K562 (cell line): ENCODE measurements at regions of chr16 and their contacts with region 1.

Region 1: DNA sequence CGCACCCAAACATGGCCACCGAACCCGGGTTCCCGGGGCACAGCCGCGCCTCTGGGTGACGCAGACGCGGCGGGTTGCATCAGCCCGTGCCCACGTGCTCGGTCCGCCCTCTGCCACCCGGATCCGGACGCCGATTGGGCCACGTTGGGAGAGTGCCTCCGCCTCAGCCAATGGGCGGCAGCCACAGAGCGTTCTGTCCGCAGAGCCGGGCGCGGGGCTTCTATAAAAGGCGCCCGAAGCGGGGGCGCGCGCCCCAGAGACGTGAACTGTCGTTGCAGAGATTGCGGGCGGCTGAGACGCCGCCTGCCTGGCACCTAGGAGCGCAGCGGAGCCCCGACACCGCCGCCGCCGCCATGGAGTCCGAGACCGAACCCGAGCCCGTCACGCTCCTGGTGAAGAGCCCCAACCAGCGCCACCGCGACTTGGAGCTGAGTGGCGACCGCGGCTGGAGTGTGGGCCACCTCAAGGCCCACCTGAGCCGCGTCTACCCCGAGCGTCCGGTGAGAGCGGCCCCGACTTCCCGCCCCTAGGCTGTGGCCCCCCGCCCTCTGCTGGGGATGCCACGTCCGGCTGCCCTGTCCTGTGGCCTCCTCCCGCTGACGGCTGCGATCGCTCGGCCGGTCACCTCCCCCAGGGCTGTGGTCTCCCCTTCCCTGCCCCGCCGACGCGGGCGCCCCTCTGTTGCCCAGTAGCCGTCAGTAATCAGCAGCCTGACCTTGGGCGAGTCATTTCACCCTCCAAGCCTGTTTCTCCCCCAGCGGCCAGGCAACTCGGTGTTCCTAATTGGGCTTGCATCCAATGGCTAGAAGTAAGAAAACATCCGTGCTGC is at the start of gene HERPUD1:
- DNase-seq: peak; percentile 97 to 99 (median 98)
- ATAC-seq: peak; percentile 92
- H3K4me3 ChIP-seq: peak within 1 kb of the TSS; percentile 95
- H3K27ac ChIP-seq: peak within 1 kb of the TSS; percentile 91
- H3K4me1 ChIP-seq: peaks cover 17 to 22% of the 10 kb centered on the region in 2 experiments; a peak in 4 of 5 replicates
- H3K27me3 ChIP-seq: no peaks in the 10 kb centered on the region
- CTCF ChIP-seq: peak in 2 of 3 experiments; percentile 15 to 23; a peak in 2 of 6 replicates
- EP300 ChIP-seq: peak; percentile 18; the same call in 1 of the 2 replicates
- POLR2A ChIP-seq: peak; percentile 95
- RAD21 ChIP-seq: no peak
- polyA plus RNA-seq, gene HERPUD1: 14.2 to 17.8 TPM

Region 2: DNA sequence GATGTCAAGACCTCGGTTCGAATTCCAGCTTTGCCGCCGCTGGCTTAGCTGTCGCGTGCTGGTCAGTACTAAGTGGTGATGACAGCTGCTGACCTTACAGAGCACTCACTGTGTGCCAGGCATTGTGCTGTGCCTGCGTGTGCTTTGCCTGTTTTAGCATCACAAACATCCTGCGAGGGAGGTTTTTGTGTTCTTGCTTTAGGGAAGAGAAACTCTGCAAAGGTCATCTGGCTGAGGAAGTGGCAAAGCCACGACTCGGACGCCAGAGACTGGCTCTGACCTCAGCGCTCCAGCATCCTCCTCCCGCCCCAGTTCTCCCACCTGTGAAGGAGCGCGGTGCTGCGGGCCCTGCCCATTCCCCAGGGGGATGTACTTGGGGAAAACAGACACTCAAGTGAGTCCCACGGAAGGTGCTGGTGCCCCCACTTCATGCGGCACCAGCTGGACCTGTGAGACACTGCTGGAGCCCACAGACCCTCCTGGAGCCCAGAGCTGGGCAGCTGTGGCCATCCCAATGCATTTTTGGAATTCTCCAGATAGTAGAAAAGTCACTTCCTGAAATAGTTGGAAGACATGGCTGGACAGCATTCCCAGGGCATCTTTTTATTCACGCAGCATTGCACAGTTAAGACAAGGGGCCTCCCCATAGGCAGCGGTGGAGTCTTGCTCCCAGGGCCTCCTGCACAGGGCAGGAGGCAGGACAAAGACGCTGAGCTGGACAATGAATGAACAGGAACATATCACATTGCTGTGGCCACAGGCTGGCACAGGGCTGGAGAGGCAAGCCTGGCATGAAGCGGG is 20.1 kb before region 1 on chr16:
- CTCF ChIA-PET with region 1: no interaction called
- POLR2A ChIA-PET with region 1: interaction called, 79 read pairs
- in situ Hi-C with region 1: no loop called
- intact Hi-C with region 1: no loop called
- DNase-seq: no peak
- ATAC-seq: no peak; the same call in 2 of the 3 replicates
- H3K4me3 ChIP-seq: no peak overlapping the region
- H3K27ac ChIP-seq: no peak overlapping the region
- H3K4me1 ChIP-seq: no peaks in the 10 kb centered on the region
- H3K27me3 ChIP-seq: peaks cover 45 to 62% of the 10 kb centered on the region in 2 experiments
- CTCF ChIP-seq: no peak
- EP300 ChIP-seq: no peak
- POLR2A ChIP-seq: no peak
- RAD21 ChIP-seq: no peak

Region 3: GRCh38 chr16:56944954-56945839 is 13.1 kb after region 1 on chr16:
- CTCF ChIA-PET with region 1: no interaction called
- POLR2A ChIA-PET with region 1: interaction called, 102 read pairs
- in situ Hi-C with region 1: no loop called
- intact Hi-C with region 1: no loop called
- DNase-seq: no peak
- ATAC-seq: peak; percentile 26
- H3K4me3 ChIP-seq: no peak overlapping the region
- H3K27ac ChIP-seq: no peak overlapping the region
- H3K4me1 ChIP-seq: no peaks in the 10 kb centered on the region
- H3K27me3 ChIP-seq: no peaks in the 10 kb centered on the region
- CTCF ChIP-seq: no peak
- EP300 ChIP-seq: no peak
- POLR2A ChIP-seq: 0 out of 2 replicates have a peak, but pooled peaks have one; percentile 30
- RAD21 ChIP-seq: no peak